Activated CD4-positive, alpha-beta memory T cell treated with anti-CD3 and anti-CD28 coated beads, Interleukin-2, amount 10 ng/mL, durations not matched to agents 7 days and 5 days (primary cell): ENCODE measurements at regions of chr9 and their contacts with region 1.

Region 1: GRCh38 chr9:78121488-78121887 is 89.9 kb upstream of the GNAQ start:
- DNase-seq: peak; percentile 64
- H3K4me3 Mint-ChIP-seq: no peak overlapping the region
- H3K27ac Mint-ChIP-seq: no peak overlapping the region
- H3K4me1 Mint-ChIP-seq: peaks cover 40% of the 10 kb centered on the region
- H3K27me3 Mint-ChIP-seq: peaks cover 1% of the 10 kb centered on the region

Region 2: GRCh38 chr9:78074385-78075291 is 46.9 kb before region 1 on chr9:
- CTCF ChIA-PET with region 1: interaction called, 11 read pairs
- POLR2A ChIA-PET with region 1: interaction called, 4 read pairs
- DNase-seq: peak; percentile 51
- H3K4me3 Mint-ChIP-seq: peak overlapping the region; percentile 18
- H3K27ac Mint-ChIP-seq: peak overlapping the region; percentile 90
- H3K4me1 Mint-ChIP-seq: peaks cover 45% of the 10 kb centered on the region
- H3K27me3 Mint-ChIP-seq: peaks cover 2% of the 10 kb centered on the region